Activated naive CD4-positive, alpha-beta T cell treated with anti-CD3 and anti-CD28 coated beads for 36 hours (primary cell): ENCODE measurements at regions of chr1 and their contacts with region 1.

Region 1: DNA sequence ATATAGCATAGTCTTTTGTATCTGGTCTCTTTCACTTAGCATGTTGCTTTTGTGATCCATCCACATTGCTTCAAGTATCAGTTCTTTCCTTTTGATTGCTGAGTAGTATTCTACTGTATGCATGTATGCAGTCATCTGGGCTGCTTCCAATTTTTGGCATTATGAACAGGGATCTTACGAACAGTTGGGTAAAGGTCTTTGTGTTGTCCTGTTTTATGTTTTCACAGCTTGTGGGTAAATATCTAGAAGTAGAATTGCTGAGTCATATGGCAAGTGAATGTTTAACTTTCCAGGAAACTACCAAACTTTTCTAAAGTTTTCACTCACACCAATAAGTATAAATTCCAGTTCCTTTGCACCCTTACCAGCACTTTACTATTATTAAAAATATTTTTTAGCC is 60.9 kb downstream of the LHX4 start:
- DNase-seq: no peak
- H3K4me3 Mint-ChIP-seq: no peak overlapping the region
- H3K27ac Mint-ChIP-seq: no peak overlapping the region
- H3K4me1 Mint-ChIP-seq: peaks cover 25% of the 10 kb centered on the region
- H3K27me3 Mint-ChIP-seq: no peaks in the 10 kb centered on the region

Region 2: GRCh38 chr1:180343931-180344769 is 53.1 kb after region 1 on chr1:
- CTCF ChIA-PET with region 1: no interaction called
- intact Hi-C with region 1: no loop called
- DNase-seq: no peak
- H3K4me3 Mint-ChIP-seq: no peak overlapping the region
- H3K27ac Mint-ChIP-seq: no peak overlapping the region
- H3K4me1 Mint-ChIP-seq: no peaks in the 10 kb centered on the region
- H3K27me3 Mint-ChIP-seq: no peaks in the 10 kb centered on the region

Region 3: DNA sequence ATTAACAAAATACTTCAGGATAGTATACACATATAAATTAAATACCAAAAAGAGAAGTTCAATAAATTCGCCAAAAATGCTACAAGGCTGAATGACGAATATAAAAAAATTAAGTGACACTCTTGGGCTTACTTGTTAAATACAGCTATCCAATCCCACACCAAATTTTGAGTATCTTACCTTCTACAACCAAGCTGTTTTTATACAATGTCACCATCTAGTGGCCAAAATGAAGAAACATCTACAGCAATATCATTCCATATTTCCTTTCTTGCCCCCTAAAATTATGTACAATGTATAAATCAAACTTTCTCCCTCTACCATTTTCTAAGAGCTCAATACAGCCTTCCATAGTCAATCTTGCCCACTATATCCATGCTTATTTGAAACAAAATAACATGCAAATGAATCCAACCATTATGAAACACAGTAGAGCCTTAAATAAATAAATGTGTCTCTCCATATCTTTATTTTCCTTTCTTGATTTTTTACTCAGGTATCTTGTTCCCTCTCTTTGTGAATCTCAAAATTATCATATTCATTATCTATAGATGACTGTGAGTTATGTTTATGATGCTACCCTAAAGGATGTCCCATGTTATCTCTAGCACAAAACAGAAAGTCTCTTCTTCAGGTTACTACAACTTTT is 125.1 kb after region 1 on chr1:
- CTCF ChIA-PET with region 1: no interaction called
- intact Hi-C with region 1: loop called (anchors 10 kb)
- DNase-seq: no peak
- H3K4me3 Mint-ChIP-seq: no peak overlapping the region
- H3K27ac Mint-ChIP-seq: no peak overlapping the region
- H3K4me1 Mint-ChIP-seq: no peaks in the 10 kb centered on the region
- H3K27me3 Mint-ChIP-seq: no peaks in the 10 kb centered on the region